B cell (primary cell): ENCODE measurements at regions of chr15 and their contacts with region 1.

Region 1: DNA sequence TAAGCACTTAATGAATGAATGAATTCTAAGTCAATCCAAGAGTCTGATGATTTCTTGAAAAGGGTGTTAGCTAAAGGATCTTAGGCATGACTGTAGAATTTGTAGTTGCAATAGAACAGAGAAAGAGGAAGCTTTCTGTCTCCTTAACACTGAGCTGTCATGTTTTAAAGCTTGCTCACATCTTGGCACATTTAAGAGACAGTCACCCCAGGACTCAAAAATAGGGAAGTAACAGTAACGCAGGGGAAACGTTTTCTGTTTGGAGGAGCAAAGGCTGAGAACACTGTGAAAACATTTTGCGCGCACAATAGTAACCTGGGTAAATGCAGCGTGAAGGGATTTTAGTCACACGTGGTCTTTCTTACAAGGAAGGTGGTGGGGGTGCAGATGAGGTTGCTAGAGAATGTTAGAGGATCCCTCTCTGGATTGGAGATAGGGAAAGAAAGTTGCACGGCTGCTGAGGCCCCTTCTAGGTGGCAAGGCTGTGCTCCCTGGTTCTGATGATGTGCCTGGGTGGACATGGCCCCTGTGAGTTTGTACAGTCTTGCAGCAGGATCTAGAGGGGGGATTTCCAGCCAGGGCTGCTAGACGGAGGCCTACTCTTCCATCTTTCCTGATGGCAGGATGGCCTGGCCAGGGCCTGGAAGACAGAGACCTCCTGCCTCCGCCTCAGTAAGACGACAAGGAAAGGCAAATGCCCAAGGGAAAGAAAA is 12.0 kb downstream of the STARD5 start:
- DNase-seq: peak; percentile 85
- ATAC-seq: peak; percentile 86
- H3K4me3 ChIP-seq: peak overlapping the region in 3 of 5 experiments; percentile 23 to 27 (median 25)
- H3K4me3 Mint-ChIP-seq: peak overlapping the region; percentile 65
- H3K27ac ChIP-seq: peak overlapping the region; percentile 66 to 88
- H3K27ac Mint-ChIP-seq: peak overlapping the region; percentile 87
- H3K4me1 ChIP-seq: peaks cover 62 to 67% of the 10 kb centered on the region in 2 donors
- H3K4me1 Mint-ChIP-seq: peaks cover 80% of the 10 kb centered on the region
- H3K27me3 ChIP-seq: no peaks in the 10 kb centered on the region
- H3K27me3 Mint-ChIP-seq: no peaks in the 10 kb centered on the region
- CTCF ChIP-seq: no peak

Region 2: DNA sequence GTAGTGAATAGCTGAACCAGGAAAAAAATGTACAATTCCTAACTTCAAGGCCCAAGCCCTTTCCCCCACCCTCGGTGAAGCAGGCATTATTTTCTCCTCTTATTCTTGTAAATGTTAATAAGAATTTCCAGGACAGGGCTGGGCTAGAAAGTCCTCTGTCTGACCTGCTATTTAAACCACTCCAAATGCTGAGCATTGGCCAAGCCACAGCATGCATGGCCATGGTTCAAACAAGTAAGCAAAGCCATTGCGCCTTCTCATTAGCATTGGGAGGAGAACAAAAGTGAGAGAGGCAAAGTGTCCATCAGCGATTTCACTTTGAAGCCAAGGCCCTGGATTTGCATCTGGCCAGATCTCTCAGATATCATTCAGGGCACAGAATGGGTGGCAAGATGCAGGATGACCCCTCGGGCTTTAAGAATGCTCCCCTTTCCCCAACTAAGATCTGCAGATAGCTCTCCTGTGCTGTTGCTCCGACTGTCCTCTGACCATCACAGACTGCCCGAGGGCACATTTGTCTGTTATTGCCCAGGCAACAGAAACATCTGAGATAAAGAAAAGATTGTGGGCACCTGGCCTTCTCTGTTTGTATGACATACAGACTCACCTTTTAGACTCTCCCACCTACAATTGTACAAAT is 486.4 kb before region 1 on chr15:
- CTCF ChIA-PET with region 1: no interaction called
- POLR2A ChIA-PET with region 1: no interaction called
- intact Hi-C with region 1: no loop called
- DNase-seq: no peak
- ATAC-seq: no peak
- H3K4me3 ChIP-seq: no peak overlapping the region
- H3K4me3 Mint-ChIP-seq: no peak overlapping the region
- H3K27ac ChIP-seq: no peak overlapping the region
- H3K27ac Mint-ChIP-seq: no peak overlapping the region
- H3K4me1 ChIP-seq: peaks cover 19 to 26% of the 10 kb centered on the region in 2 donors
- H3K4me1 Mint-ChIP-seq: peaks cover 30% of the 10 kb centered on the region
- H3K27me3 ChIP-seq: no peaks in the 10 kb centered on the region
- H3K27me3 Mint-ChIP-seq: peaks cover 10% of the 10 kb centered on the region
- CTCF ChIP-seq: no peak

Region 3: GRCh38 chr15:81323944-81324881 is 12.3 kb after region 1 on chr15 and contains the start of gene STARD5:
- CTCF ChIA-PET with region 1: interaction called, 6 read pairs
- POLR2A ChIA-PET with region 1: interaction called, 4 read pairs
- intact Hi-C with region 1: loop called (anchors 1 kb)
- DNase-seq: peak; percentile 92
- ATAC-seq: peak; percentile 99
- H3K4me3 ChIP-seq: peak within 1 kb of the TSS; percentile 54 to 79 (median 77)
- H3K4me3 Mint-ChIP-seq: peak within 1 kb of the TSS; percentile 100
- H3K27ac ChIP-seq: peak within 1 kb of the TSS; percentile 27 to 68
- H3K27ac Mint-ChIP-seq: peak within 1 kb of the TSS; percentile 95
- H3K4me1 ChIP-seq: peaks cover 18 to 32% of the 10 kb centered on the region in 2 donors
- H3K4me1 Mint-ChIP-seq: peaks cover 32% of the 10 kb centered on the region
- H3K27me3 ChIP-seq: no peaks in the 10 kb centered on the region
- H3K27me3 Mint-ChIP-seq: no peaks in the 10 kb centered on the region
- CTCF ChIP-seq: no peak
- total RNA-seq, gene STARD5: 15.7 and 17.2 TPM in 2 replicates